ENCODE measurements at regions of chr13 and their contacts with region 1.

Region 1: GRCh38 chr13:20197361-20197834 is 4.7 kb upstream of the GJB2 start:
- DNase-seq: peak; percentile 10 to 37 (median 18)
- ATAC-seq: peak; percentile 46; the same call in 2 of the 3 replicates
- H3K4me3 ChIP-seq: no peak overlapping the region
- H3K27ac ChIP-seq: no peak overlapping the region
- H3K4me1 ChIP-seq: peaks cover 0 to 4% of the 10 kb centered on the region in 2 experiments; a peak in 1 of 5 replicates
- H3K27me3 ChIP-seq: peaks cover 3 to 9% of the 10 kb centered on the region in 2 experiments; a peak in 3 of 5 replicates
- CTCF ChIP-seq: peak; percentile 43 to 56 (median 51)
- EP300 ChIP-seq: no peak
- POLR2A ChIP-seq: no peak
- RAD21 ChIP-seq: no peak

Region 2: GRCh38 chr13:20291037-20291436 is 93.6 kb after region 1 on chr13:
- CTCF ChIA-PET with region 1: no interaction called
- POLR2A ChIA-PET with region 1: no interaction called
- in situ Hi-C with region 1: no loop called
- intact Hi-C with region 1: no loop called
- DNase-seq: no peak
- ATAC-seq: no peak
- H3K4me3 ChIP-seq: no peak overlapping the region
- H3K27ac ChIP-seq: no peak overlapping the region
- H3K4me1 ChIP-seq: no peaks in the 10 kb centered on the region; a peak in 1 of 5 replicates
- H3K27me3 ChIP-seq: no peaks in the 10 kb centered on the region; a peak in 1 of 5 replicates
- CTCF ChIP-seq: no peak
- EP300 ChIP-seq: no peak
- POLR2A ChIP-seq: no peak
- RAD21 ChIP-seq: no peak

Region 3: DNA sequence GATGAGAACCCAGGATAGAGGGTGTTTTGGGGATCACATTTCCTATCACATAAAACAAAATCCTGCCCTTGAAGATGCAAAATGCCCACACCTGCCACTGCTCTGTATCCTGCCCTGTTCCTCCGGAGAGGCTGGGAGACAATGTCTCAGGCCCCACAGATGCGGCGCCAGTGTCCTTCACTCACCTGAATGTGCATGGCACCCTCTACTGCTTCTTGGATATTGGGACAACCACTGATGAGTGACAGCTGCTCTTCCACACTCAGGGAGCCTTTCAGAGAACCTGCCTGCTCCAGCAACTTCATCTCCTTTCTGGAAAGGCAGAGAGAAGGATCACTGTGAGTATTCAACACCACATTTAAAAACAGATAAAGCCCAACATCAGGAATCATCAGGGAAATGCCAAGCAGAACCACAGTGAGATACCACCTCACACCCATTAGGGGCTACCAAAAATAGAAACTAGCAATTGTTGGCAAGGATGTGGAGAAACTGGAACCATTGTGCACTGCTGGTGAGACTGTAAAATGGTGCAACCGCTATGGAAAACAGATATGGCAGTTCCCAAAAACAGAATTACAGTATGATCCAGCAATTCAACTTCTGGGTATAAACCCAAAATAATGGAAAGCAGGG is 291.9 kb after region 1 on chr13:
- CTCF ChIA-PET with region 1: no interaction called
- POLR2A ChIA-PET with region 1: no interaction called
- in situ Hi-C with region 1: no loop called
- intact Hi-C with region 1: loop called (anchors 5 kb)
- DNase-seq: no peak
- ATAC-seq: peak; percentile 51; the same call in 2 of the 3 replicates
- H3K4me3 ChIP-seq: no peak overlapping the region
- H3K27ac ChIP-seq: no peak overlapping the region
- H3K4me1 ChIP-seq: no peaks in the 10 kb centered on the region
- H3K27me3 ChIP-seq: no peaks in the 10 kb centered on the region
- CTCF ChIP-seq: peak in 1 of 3 experiments; percentile 31; a peak in 1 of 6 replicates
- EP300 ChIP-seq: no peak
- POLR2A ChIP-seq: no peak
- RAD21 ChIP-seq: peak; percentile 30 to 43

Region 4: GRCh38 chr13:20924758-20925394 is 727.5 kb after region 1 on chr13:
- CTCF ChIA-PET with region 1: no interaction called
- POLR2A ChIA-PET with region 1: interaction called, 3 read pairs
- in situ Hi-C with region 1: no loop called
- intact Hi-C with region 1: loop called (anchors 5 kb)
- DNase-seq: peak; percentile 26 to 82 (median 33)
- ATAC-seq: peak; percentile 87
- H3K4me3 ChIP-seq: no peak overlapping the region
- H3K27ac ChIP-seq: no peak overlapping the region
- H3K4me1 ChIP-seq: no peaks in the 10 kb centered on the region
- H3K27me3 ChIP-seq: no peaks in the 10 kb centered on the region
- CTCF ChIP-seq: peak; percentile 62 to 77 (median 70)
- EP300 ChIP-seq: no peak
- POLR2A ChIP-seq: no peak
- RAD21 ChIP-seq: peak; percentile 61 to 83